Activated CD4-positive, alpha-beta memory T cell treated with anti-CD3 and anti-CD28 coated beads for 36 hours (primary cell): ENCODE measurements at regions of chr15 and their contacts with region 1.

Region 1: DNA sequence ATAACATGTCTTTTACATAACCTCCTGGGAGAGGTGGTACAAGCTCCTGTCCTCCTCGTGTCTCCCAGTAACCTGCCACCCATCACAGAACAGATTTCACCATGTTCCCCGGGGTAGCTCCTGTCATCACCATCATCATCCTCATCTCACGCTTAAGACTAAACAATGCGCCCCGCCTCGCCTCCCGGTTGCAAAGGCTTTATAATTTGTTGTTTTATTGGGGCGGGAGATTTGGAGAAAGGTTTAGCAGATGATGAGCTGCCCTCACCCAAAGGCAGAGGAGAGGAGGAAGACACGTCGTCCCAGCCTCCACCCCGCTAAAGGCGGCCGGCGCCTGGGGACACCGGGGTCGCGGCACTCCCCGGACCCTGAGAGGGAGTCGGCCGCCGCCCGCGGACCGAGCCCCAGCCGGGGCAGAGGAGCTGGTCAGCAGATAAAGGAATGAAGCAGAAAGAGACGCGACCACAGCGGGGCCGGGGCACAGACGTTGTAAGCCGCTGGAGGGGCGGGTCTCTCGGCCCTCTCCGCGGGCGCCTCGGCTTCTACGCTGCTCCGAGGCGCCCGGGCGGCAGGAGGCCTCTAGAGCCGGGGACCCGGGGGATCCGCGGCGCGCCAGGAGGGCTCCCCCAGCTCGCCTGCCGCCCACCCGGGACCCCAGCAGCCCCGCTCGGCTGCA is 589 bp downstream of the HERC1 start:
- DNase-seq: peak; percentile 46
- H3K4me3 Mint-ChIP-seq: peak overlapping the region; percentile 96
- H3K27ac Mint-ChIP-seq: peak overlapping the region; percentile 66
- H3K4me1 Mint-ChIP-seq: peaks cover 44% of the 10 kb centered on the region
- H3K27me3 Mint-ChIP-seq: no peaks in the 10 kb centered on the region

Region 2: GRCh38 chr15:63473999-63474809 is 359.0 kb before region 1 on chr15:
- CTCF ChIA-PET with region 1: no interaction called
- POLR2A ChIA-PET with region 1: no interaction called
- intact Hi-C with region 1: loop called (anchors 10 kb)
- DNase-seq: peak; percentile 84
- H3K4me3 Mint-ChIP-seq: peak overlapping the region; percentile 43
- H3K27ac Mint-ChIP-seq: peak overlapping the region; percentile 72
- H3K4me1 Mint-ChIP-seq: peaks cover 55% of the 10 kb centered on the region
- H3K27me3 Mint-ChIP-seq: no peaks in the 10 kb centered on the region

Region 3: DNA sequence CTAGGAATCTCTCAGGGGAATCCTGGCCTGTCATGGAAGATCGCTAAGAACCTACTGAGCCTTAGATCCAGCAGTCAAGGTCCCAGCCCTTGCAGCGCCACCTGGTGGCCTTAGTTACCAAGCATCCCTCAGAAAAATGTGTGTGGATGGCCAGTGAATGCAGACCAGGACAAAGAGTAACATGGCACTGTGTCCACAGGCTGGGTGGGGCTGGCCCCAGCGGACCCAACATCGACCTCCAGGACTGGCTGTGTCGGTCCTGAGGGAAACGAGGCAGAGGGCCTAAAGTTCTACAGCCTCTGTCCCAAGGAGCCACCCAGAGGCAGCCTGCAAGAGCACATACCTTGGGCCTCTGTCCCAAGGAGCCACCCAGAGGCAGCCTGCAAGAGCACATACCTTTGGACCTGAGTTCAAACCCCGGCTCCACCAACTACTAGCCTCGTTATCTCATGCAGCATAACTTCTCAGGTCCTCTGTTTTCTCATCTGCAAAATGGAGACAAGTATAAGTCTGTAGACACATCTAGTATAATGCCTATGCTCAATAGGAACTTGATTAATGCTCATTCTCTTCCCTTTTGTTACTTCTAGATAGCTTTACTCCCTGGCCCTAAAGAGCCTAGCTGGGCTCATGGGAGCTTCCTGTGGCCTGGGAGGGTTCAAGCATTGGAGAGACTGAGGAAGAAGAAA is 58.1 kb after region 1 on chr15:
- CTCF ChIA-PET with region 1: interaction called, 4 read pairs
- POLR2A ChIA-PET with region 1: no interaction called
- intact Hi-C with region 1: loop called (anchors 2 kb)
- DNase-seq: peak; percentile 85
- H3K4me3 Mint-ChIP-seq: no peak overlapping the region
- H3K27ac Mint-ChIP-seq: no peak overlapping the region
- H3K4me1 Mint-ChIP-seq: peaks cover 40% of the 10 kb centered on the region
- H3K27me3 Mint-ChIP-seq: no peaks in the 10 kb centered on the region

Region 4: DNA sequence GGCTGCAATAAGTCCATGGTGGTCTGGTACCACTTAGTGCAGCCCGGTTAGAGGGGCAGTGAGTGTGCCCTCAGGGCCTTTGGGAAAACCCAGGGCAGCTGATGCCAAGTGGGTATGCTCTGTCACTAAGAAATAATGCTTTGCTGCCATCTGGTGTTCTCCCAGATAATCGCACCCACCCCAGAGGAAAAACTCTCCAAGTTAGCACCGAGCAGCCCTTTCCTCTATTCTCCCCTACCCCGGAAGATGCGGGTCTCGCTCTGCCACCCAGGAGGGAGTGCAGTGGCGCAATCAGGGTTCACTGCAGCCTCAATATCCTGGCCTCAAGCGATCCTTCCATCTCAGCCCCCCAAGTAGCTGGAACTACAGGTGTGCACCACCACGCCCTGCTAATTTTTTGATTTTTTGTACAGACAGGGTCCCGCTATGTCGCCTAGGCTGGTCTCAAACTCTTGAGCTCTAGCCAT is 234.4 kb after region 1 on chr15:
- CTCF ChIA-PET with region 1: no interaction called
- POLR2A ChIA-PET with region 1: no interaction called
- intact Hi-C with region 1: loop called (anchors 5 kb)
- DNase-seq: peak; percentile 73
- H3K4me3 Mint-ChIP-seq: no peak overlapping the region
- H3K27ac Mint-ChIP-seq: peak overlapping the region; percentile 38
- H3K4me1 Mint-ChIP-seq: peaks cover 4% of the 10 kb centered on the region
- H3K27me3 Mint-ChIP-seq: no peaks in the 10 kb centered on the region